ENCODE measurements at regions of chr6 and their contacts with region 1.

Region 1: GRCh38 chr6:132218059-132218696 is 183.1 kb downstream of the MOXD1 start:
- DNase-seq: no peak
- H3K4me3 ChIP-seq: no peak overlapping the region
- H3K4me3 Mint-ChIP-seq: no peak overlapping the region
- H3K27ac Mint-ChIP-seq: no peak overlapping the region
- H3K4me1 ChIP-seq: no peaks in the 10 kb centered on the region
- H3K4me1 Mint-ChIP-seq: no peaks in the 10 kb centered on the region
- H3K27me3 ChIP-seq: no peaks in the 10 kb centered on the region
- H3K27me3 Mint-ChIP-seq: peaks cover 4% of the 10 kb centered on the region
- CTCF ChIP-seq: peak; percentile 32 to 41

Region 2: DNA sequence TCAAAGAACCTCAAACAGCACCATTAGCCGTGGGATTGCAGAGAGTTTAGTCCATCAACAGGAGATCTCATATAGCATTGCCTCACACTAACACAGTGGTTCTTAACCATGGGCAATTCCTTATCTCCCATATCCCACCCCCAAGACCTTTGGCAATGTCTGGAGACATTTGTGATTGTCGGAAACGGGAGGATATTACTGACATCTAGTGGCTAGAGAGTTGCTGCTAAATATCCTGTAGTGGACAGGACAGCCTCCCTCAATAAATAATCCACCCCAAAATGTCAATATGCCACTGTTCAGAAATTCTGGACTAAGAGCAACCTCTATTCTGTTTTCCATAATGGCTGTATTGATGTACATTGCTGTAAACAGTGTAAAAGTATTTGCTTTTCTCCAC is 56.9 kb before region 1 on chr6:
- CTCF ChIA-PET with region 1: no interaction called
- POLR2A ChIA-PET with region 1: no interaction called
- intact Hi-C with region 1: loop called (anchors 2 kb)
- DNase-seq: peak in 1 of 2 experiments; percentile 45
- H3K4me3 ChIP-seq: no peak overlapping the region
- H3K4me3 Mint-ChIP-seq: no peak overlapping the region
- H3K27ac Mint-ChIP-seq: no peak overlapping the region
- H3K4me1 ChIP-seq: no peaks in the 10 kb centered on the region
- H3K4me1 Mint-ChIP-seq: no peaks in the 10 kb centered on the region
- H3K27me3 ChIP-seq: no peaks in the 10 kb centered on the region
- H3K27me3 Mint-ChIP-seq: no peaks in the 10 kb centered on the region
- CTCF ChIP-seq: peak; percentile 47 to 65

Region 3: GRCh38 chr6:132247381-132248159 is 29.4 kb after region 1 on chr6:
- CTCF ChIA-PET with region 1: no interaction called
- POLR2A ChIA-PET with region 1: no interaction called
- intact Hi-C with region 1: no loop called
- DNase-seq: no peak
- H3K4me3 ChIP-seq: no peak overlapping the region
- H3K4me3 Mint-ChIP-seq: no peak overlapping the region
- H3K27ac Mint-ChIP-seq: no peak overlapping the region
- H3K4me1 ChIP-seq: no peaks in the 10 kb centered on the region
- H3K4me1 Mint-ChIP-seq: no peaks in the 10 kb centered on the region
- H3K27me3 ChIP-seq: no peaks in the 10 kb centered on the region
- H3K27me3 Mint-ChIP-seq: peaks cover 16% of the 10 kb centered on the region
- CTCF ChIP-seq: no peak

Region 4: GRCh38 chr6:132298344-132298949 is 80.3 kb after region 1 on chr6:
- CTCF ChIA-PET with region 1: no interaction called
- POLR2A ChIA-PET with region 1: no interaction called
- intact Hi-C with region 1: no loop called
- DNase-seq: peak; percentile 39 to 48
- H3K4me3 ChIP-seq: no peak overlapping the region
- H3K4me3 Mint-ChIP-seq: no peak overlapping the region
- H3K27ac Mint-ChIP-seq: no peak overlapping the region
- H3K4me1 ChIP-seq: no peaks in the 10 kb centered on the region
- H3K4me1 Mint-ChIP-seq: no peaks in the 10 kb centered on the region
- H3K27me3 ChIP-seq: no peaks in the 10 kb centered on the region
- H3K27me3 Mint-ChIP-seq: peaks cover 8% of the 10 kb centered on the region
- CTCF ChIP-seq: peak; percentile 38 to 73

Region 5: DNA sequence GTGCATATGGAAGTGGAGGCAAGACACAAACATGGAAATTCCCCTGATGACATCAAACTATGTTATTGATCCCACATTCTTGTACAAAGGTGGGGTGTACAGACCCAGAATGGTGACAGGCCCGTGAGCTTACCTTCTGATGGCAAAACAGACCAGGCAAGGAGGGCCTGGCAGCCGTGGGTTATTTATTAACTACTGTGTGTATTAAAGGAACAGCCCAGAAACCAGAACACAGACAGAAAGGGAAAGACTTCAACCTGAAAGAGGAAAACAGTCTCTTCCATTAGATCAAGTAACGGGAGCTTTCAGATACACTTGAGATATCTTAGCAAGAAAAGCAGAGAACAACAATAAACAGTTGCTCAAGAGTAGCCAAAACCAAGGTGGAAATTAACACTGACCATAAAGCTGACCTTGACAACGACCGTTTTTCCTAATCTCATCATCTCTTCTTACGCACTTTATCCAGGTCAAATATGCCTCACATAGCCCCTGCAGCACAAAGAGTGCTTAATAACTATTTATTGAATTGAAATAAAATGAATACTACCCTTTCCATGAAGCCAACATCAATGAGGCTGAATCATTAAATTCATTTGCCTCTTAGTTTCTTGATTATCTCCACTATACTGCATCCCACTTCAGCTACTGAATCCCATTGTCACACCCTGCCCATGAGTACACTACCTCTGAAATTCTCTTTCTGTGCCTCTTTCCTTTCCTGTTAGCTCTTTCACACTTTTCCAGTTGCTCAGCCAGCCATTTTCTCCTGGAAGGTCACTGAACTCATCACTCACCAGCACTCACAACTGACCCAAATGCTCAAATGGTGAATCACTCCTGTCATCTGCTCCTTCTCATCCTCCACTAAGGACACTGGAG is 115.7 kb after region 1 on chr6:
- CTCF ChIA-PET with region 1: no interaction called
- POLR2A ChIA-PET with region 1: no interaction called
- intact Hi-C with region 1: no loop called
- DNase-seq: peak; percentile 73
- H3K4me3 ChIP-seq: no peak overlapping the region
- H3K4me3 Mint-ChIP-seq: peak overlapping the region; percentile 65
- H3K27ac Mint-ChIP-seq: peak overlapping the region; percentile 63
- H3K4me1 ChIP-seq: peaks cover 20% of the 10 kb centered on the region
- H3K4me1 Mint-ChIP-seq: peaks cover 20% of the 10 kb centered on the region
- H3K27me3 ChIP-seq: no peaks in the 10 kb centered on the region
- H3K27me3 Mint-ChIP-seq: no peaks in the 10 kb centered on the region
- CTCF ChIP-seq: no peak

Region 6: DNA sequence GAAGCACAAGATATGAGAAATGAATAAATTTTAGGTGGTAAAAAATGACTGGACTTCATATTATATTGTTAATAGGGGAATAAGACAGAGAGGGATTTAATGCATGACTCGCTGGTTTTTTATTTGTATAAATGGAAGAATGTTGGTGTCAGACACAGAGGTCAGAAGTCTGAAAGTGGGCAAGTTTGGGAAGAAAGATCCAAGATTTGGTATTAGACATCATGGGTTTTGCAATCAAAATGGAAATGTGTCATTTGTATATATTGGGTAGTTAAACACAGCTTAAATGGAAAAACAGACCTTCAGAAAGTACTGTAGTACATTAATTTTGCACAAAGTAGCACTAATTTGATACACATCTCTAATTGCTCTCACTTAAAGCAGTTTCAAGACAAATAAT is 1119.1 kb after region 1 on chr6:
- CTCF ChIA-PET with region 1: no interaction called
- POLR2A ChIA-PET with region 1: no interaction called
- intact Hi-C with region 1: no loop called
- DNase-seq: no peak
- H3K4me3 ChIP-seq: no peak overlapping the region
- H3K4me3 Mint-ChIP-seq: no peak overlapping the region
- H3K27ac Mint-ChIP-seq: no peak overlapping the region
- H3K4me1 ChIP-seq: no peaks in the 10 kb centered on the region; the same call in 1 of the 2 replicates
- H3K4me1 Mint-ChIP-seq: no peaks in the 10 kb centered on the region
- H3K27me3 ChIP-seq: no peaks in the 10 kb centered on the region
- H3K27me3 Mint-ChIP-seq: peaks cover 3% of the 10 kb centered on the region
- CTCF ChIP-seq: no peak

Measured in Caco-2 (cell line).